Gastrocnemius medialis (tissue), 4 donors: ENCODE measurements at regions of chr9 and their contacts with region 1.

Region 1: DNA sequence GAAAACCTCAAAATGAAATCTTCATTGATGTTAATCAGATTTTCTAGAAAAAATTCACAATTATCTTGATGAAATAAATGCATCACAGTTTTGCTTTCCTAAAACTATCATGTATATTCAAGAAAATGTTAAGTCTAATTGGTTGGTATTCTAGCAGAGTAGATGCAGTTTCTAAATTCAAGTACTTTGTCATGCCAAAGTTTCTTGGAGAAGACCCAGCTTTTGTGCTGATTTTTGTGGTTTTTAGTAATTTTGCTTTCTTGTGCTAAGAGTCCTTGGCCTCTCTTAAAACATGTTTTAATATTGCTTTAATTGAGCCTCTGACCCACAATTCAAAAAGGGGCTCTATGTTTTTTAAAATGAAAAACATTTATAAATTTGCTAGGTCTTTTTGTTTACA is 924.8 kb upstream of the PTPRD start:
- DNase-seq: no peak
- ATAC-seq: no peak
- H3K4me3 ChIP-seq: no peak overlapping the region
- H3K27ac ChIP-seq: no peak overlapping the region
- H3K4me1 ChIP-seq: no peaks in the 10 kb centered on the region
- H3K27me3 ChIP-seq: no peaks in the 10 kb centered on the region
- CTCF ChIP-seq: no peak
- POLR2A ChIP-seq: no peak

Region 2: GRCh38 chr9:11443631-11444030 is 93.9 kb before region 1 on chr9:
- in situ Hi-C with region 1: loop called in 1 of 4 experiments (anchors 25 kb)
- intact Hi-C with region 1: no loop called
- DNase-seq: no peak
- ATAC-seq: no peak
- H3K4me3 ChIP-seq: no peak overlapping the region
- H3K27ac ChIP-seq: no peak overlapping the region
- H3K4me1 ChIP-seq: no peaks in the 10 kb centered on the region
- H3K27me3 ChIP-seq: no peaks in the 10 kb centered on the region
- CTCF ChIP-seq: no peak
- POLR2A ChIP-seq: no peak